IMR-90 (cell line): ENCODE measurements at regions of chr6 and their contacts with region 1.

Region 1: DNA sequence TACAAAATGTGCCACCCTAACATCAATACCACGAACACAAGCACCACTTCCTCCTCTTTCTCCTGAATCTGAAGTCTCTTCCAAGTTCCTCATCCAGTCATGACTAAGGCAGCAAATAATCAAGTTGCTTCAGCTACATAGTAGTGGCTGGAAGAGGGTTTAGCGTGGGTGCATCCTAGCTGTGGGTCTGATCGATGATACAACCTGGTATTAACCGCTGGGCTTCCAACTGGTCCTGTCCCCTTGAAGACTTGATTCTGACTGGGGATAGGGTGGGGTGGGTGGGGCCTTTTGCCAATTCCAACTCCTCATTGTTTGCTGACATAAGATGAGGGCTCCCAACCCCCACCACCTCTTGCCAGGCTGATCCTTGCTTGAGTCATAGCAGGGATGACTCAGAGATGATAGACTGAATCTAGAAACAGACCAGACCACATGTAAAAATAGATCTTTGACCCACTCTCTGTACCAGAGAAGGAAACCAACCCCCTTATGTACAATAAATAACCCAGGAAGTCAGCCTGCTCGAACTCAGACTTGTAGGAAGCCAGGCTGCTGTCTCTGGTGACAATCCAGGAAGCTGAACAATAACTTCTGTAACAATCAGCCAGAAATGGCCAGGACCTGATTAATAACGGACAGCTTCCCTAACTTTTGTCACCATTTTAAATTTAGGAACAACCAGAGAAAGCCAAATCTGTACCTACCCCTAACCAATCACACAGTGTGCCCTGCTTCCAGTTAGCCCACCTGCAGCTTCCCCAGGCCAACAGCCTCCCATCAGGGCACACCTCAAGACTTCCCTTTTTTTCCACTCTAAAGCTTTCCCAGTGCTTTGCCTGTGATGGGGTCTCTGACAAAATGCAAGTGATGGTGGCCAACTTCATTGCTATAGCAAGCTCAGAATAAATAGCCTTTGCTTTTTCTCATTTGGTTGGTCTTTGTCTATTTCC is 68.9 kb upstream of the FAM184A start:
- DNase-seq: peak; percentile 98
- ATAC-seq: peak; percentile 88
- H3K4me3 ChIP-seq: no peak overlapping the region; the same call in 1 of the 2 replicates
- H3K27ac ChIP-seq: peak overlapping the region; percentile 55; the same call in 1 of the 2 replicates
- H3K4me1 ChIP-seq: peaks cover 16% of the 10 kb centered on the region
- H3K27me3 ChIP-seq: no peaks in the 10 kb centered on the region
- CTCF ChIP-seq: no peak
- POLR2A ChIP-seq: no peak
- RAD21 ChIP-seq: no peak

Region 2: GRCh38 chr6:118825661-118826060 is 321.7 kb before region 1 on chr6:
- CTCF ChIA-PET with region 1: no interaction called
- POLR2A ChIA-PET with region 1: no interaction called
- dilution Hi-C with region 1: no loop called
- in situ Hi-C with region 1: no loop called
- intact Hi-C with region 1: no loop called
- DNase-seq: no peak
- ATAC-seq: no peak
- H3K4me3 ChIP-seq: no peak overlapping the region
- H3K27ac ChIP-seq: no peak overlapping the region
- H3K4me1 ChIP-seq: no peaks in the 10 kb centered on the region
- H3K27me3 ChIP-seq: no peaks in the 10 kb centered on the region
- CTCF ChIP-seq: no peak
- POLR2A ChIP-seq: no peak
- RAD21 ChIP-seq: no peak

Region 3: DNA sequence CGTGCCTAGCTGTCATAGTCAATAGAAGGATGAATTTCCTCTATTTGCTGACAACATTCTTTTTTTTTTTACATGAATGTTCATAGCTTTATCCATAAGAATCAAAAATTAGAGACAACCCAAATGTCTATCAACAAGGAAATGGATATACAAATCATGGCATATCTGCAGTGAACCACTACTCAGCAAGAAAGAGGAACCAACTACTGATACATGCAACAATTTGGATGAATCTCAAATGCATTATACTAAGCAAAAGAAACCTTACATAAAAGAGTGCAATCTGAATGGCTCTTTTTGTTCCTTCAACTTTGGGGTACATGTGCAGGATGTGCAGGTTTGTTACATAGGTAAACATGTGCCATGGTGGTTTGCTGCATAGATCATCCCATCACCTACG is 194.7 kb before region 1 on chr6:
- CTCF ChIA-PET with region 1: no interaction called
- POLR2A ChIA-PET with region 1: no interaction called
- dilution Hi-C with region 1: no loop called
- in situ Hi-C with region 1: no loop called
- intact Hi-C with region 1: no loop called
- DNase-seq: no peak
- ATAC-seq: no peak
- H3K4me3 ChIP-seq: no peak overlapping the region
- H3K27ac ChIP-seq: no peak overlapping the region
- H3K4me1 ChIP-seq: no peaks in the 10 kb centered on the region
- H3K27me3 ChIP-seq: no peaks in the 10 kb centered on the region; the same call in 1 of the 2 replicates
- CTCF ChIP-seq: no peak
- POLR2A ChIP-seq: no peak
- RAD21 ChIP-seq: no peak

Region 4: DNA sequence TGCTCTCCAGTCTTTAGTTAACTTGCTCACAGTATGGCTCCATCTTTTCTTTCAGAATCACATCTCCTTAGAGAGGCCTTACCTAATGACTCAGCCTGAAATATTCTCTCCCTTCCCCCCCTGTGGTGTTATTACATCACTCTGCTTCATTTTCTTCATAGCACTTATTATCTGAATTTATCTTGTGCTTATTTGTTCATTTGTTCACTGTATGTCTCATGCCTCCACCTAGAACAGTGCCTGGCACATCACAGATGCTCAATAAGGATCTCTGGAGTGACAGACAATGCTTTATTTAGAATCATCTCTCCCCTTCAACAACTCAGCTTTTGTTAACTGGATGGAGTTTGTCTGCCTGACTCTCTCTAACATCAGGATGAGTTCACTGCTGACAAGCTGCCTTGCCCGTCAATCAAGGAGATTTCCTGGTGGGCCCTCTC is 298.8 kb after region 1 on chr6:
- CTCF ChIA-PET with region 1: no interaction called
- POLR2A ChIA-PET with region 1: no interaction called
- dilution Hi-C with region 1: no loop called
- in situ Hi-C with region 1: no loop called
- intact Hi-C with region 1: loop called (anchors 1 kb)
- DNase-seq: peak; percentile 68
- ATAC-seq: peak; percentile 73
- H3K4me3 ChIP-seq: no peak overlapping the region
- H3K27ac ChIP-seq: no peak overlapping the region; the same call in 1 of the 2 replicates
- H3K4me1 ChIP-seq: peaks cover 7% of the 10 kb centered on the region
- H3K27me3 ChIP-seq: no peaks in the 10 kb centered on the region
- CTCF ChIP-seq: no peak
- POLR2A ChIP-seq: no peak
- RAD21 ChIP-seq: no peak

Region 5: GRCh38 chr6:119742188-119742803 is 594.9 kb after region 1 on chr6:
- CTCF ChIA-PET with region 1: no interaction called
- POLR2A ChIA-PET with region 1: no interaction called
- dilution Hi-C with region 1: no loop called
- in situ Hi-C with region 1: no loop called
- intact Hi-C with region 1: loop called (anchors 10 kb)
- DNase-seq: peak; percentile 24
- ATAC-seq: peak; percentile 57
- H3K4me3 ChIP-seq: no peak overlapping the region
- H3K27ac ChIP-seq: no peak overlapping the region
- H3K4me1 ChIP-seq: no peaks in the 10 kb centered on the region
- H3K27me3 ChIP-seq: no peaks in the 10 kb centered on the region
- CTCF ChIP-seq: peak; percentile 63
- POLR2A ChIP-seq: no peak
- RAD21 ChIP-seq: peak; percentile 58

Region 6: DNA sequence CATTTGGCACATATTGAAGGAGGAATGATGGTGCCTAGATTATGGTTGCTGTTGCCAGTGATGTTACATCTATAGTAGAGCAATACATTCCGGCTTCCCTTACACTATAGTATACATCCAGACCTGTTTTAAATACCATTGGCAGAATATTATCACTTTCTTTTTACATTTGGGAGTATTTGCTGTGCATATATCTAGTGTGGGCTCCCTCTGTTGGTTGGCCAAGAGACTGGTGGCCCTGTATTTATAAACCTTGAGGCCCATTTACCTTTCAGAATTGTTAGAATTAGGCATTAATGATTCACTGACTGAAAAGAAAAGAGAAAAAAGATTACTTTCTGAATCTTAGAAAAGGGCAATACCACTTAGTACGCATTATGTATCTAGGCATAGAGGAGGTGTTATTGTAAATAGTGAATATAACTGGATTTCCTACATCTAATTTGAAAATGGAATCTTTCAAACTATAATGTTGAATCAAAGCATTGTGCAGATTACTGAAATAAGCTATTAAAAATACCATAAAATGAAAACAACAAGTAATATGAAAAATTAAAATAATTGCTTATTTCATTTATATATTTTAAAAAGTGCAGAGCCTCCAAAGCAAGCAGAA is 831.0 kb after region 1 on chr6:
- CTCF ChIA-PET with region 1: no interaction called
- POLR2A ChIA-PET with region 1: no interaction called
- dilution Hi-C with region 1: no loop called
- in situ Hi-C with region 1: no loop called
- intact Hi-C with region 1: loop called (anchors 1 kb)
- DNase-seq: peak; percentile 26
- ATAC-seq: peak; percentile 48; the same call in 1 of the 2 replicates
- H3K4me3 ChIP-seq: no peak overlapping the region
- H3K27ac ChIP-seq: no peak overlapping the region
- H3K4me1 ChIP-seq: no peaks in the 10 kb centered on the region
- H3K27me3 ChIP-seq: no peaks in the 10 kb centered on the region
- CTCF ChIP-seq: peak; percentile 56
- POLR2A ChIP-seq: no peak
- RAD21 ChIP-seq: peak; percentile 47